Activated T-helper 1 cell treated with anti-CD3 and anti-CD28 coated beads, Interleukin-12 subunit alpha, Interleukin-12 subunit beta, Interleukin-2, Interleukin-4 antibody, amounts not matched to agents 30 ng/mL and 10 ng/mL and 1 ng/mL, durations not matched to agents 14 hours and 24 hours and 36 hours (primary cell): ENCODE measurements at regions of chr15 and their contacts with region 1.

Region 1: GRCh38 chr15:85412956-85413854 is 32.8 kb downstream of the AKAP13 start:
- DNase-seq: peak; percentile 66
- H3K4me3 Mint-ChIP-seq: peak overlapping the region; percentile 64
- H3K27ac Mint-ChIP-seq: peak overlapping the region; percentile 85
- H3K4me1 Mint-ChIP-seq: peaks cover 64% of the 10 kb centered on the region
- H3K27me3 Mint-ChIP-seq: no peaks in the 10 kb centered on the region

Region 2: DNA sequence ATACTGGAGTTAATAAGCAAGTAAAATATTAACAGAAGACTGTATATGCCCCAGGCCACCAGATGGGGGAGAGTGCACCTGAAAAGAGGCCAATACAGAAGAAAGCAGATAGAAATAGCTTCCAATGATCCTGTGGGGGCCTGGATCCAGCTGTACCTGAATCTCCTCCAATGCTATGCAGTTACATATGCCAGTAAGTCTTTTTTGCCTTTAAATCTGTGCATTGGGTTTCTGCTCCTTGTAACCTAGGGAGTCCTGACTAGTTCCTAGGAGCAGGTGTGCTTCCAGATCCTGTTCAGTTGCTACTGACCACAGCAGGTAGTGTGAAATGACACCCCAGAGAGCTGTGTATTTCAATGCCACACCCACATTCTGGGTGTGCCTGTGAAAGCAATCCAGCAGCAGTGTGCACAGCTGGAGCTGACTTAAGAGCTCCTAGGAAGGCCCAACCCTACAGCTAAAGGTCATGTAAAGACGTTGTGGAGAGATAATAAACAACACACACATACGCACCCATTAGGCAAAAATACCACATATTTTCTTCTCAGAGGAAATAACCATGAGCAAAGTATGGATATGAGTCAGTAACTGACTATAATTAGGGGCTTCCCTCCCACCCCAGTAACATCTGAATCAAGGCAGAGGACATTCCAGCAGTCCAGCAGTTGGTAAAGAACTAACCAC is 95.0 kb before region 1 on chr15:
- intact Hi-C with region 1: loop called (anchors 1 kb)
- DNase-seq: peak; percentile 41
- H3K4me3 Mint-ChIP-seq: peak overlapping the region; percentile 38
- H3K27ac Mint-ChIP-seq: peak overlapping the region; percentile 87
- H3K4me1 Mint-ChIP-seq: peaks cover 59% of the 10 kb centered on the region
- H3K27me3 Mint-ChIP-seq: no peaks in the 10 kb centered on the region

Region 3: DNA sequence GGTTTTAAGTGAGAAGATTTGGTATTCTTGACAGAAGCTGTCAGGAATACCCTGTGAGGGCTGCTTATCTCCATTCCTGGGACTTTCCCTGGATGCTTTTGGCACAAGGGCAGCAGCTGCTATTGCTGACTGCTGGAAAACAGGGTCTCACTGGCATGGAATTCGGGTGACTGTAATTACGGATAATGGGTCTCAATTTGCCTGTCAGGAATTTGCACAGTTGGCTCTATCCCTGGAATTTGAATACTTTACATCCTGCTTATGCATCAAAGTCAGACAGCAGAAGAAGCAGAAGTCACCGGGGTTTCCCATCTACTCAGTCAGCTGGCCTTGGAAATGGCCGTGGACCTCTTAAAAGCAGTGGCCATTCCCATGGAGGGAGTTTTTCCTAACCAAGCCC is 58.7 kb before region 1 on chr15:
- intact Hi-C with region 1: loop called (anchors 1 kb)
- DNase-seq: no peak
- H3K4me3 Mint-ChIP-seq: no peak overlapping the region
- H3K27ac Mint-ChIP-seq: no peak overlapping the region
- H3K4me1 Mint-ChIP-seq: peaks cover 9% of the 10 kb centered on the region
- H3K27me3 Mint-ChIP-seq: no peaks in the 10 kb centered on the region

Region 4: DNA sequence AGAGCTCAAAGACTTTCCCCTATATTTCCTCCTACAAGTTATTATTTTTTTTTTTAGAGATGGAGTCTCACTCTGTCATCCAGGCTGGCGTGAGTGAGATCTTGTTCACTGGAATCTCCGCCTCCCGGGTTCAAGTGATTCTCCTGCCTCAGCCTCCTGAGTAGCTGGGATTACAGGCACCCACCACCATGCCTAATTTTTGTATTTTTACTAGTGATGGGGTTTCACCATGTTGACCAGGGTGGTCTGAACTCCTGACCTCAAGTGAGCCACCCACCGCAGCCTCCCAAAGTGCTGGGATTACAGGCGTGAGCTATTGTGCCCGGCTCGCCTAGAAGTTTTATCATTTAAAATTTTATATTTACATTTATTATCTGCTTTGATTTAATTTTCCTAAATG is 26.9 kb before region 1 on chr15:
- intact Hi-C with region 1: no loop called
- DNase-seq: no peak
- H3K4me3 Mint-ChIP-seq: no peak overlapping the region
- H3K27ac Mint-ChIP-seq: no peak overlapping the region
- H3K4me1 Mint-ChIP-seq: peaks cover 39% of the 10 kb centered on the region
- H3K27me3 Mint-ChIP-seq: no peaks in the 10 kb centered on the region

Region 5: GRCh38 chr15:85430406-85431204 is 17.4 kb after region 1 on chr15:
- intact Hi-C with region 1: loop called (anchors 1 kb)
- DNase-seq: no peak
- H3K4me3 Mint-ChIP-seq: no peak overlapping the region
- H3K27ac Mint-ChIP-seq: peak overlapping the region; percentile 34
- H3K4me1 Mint-ChIP-seq: peaks cover 26% of the 10 kb centered on the region
- H3K27me3 Mint-ChIP-seq: no peaks in the 10 kb centered on the region

Region 6: GRCh38 chr15:85543741-85544155 is 130.5 kb after region 1 on chr15:
- intact Hi-C with region 1: loop called (anchors 5 kb)
- DNase-seq: peak; percentile 22
- H3K4me3 Mint-ChIP-seq: peak overlapping the region; percentile 50
- H3K27ac Mint-ChIP-seq: peak overlapping the region; percentile 59
- H3K4me1 Mint-ChIP-seq: peaks cover 83% of the 10 kb centered on the region
- H3K27me3 Mint-ChIP-seq: no peaks in the 10 kb centered on the region

Region 7: DNA sequence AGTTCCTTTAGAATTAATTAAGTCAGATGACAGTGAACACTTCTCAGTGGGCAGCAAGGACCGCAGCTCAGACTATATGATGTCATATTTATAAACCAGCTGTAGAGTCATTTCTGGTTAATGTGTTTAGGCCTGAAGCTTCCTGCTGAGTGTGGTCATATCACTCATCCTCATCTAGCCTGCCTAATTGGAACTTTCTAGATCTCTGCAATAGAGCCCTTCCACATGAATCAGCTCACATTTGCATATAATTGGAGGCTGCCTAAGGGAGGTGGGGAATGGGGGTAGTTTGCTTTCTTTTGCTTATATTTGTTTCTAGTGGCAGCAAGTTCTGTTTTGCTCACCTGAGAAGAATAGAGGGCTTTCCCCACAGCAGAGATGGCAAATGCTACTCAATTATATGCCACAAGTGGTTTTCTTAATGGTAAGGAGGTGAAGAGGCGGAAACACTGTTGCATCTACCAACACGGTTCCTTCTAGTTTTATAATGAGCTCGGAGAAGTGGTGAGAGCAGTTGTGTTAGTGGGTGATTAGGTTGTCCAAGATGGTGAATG is 233.4 kb after region 1 on chr15:
- intact Hi-C with region 1: loop called (anchors 2 kb)
- DNase-seq: peak; percentile 14
- H3K4me3 Mint-ChIP-seq: peak overlapping the region; percentile 30
- H3K27ac Mint-ChIP-seq: peak overlapping the region; percentile 92
- H3K4me1 Mint-ChIP-seq: peaks cover 44% of the 10 kb centered on the region
- H3K27me3 Mint-ChIP-seq: no peaks in the 10 kb centered on the region

Region 8: DNA sequence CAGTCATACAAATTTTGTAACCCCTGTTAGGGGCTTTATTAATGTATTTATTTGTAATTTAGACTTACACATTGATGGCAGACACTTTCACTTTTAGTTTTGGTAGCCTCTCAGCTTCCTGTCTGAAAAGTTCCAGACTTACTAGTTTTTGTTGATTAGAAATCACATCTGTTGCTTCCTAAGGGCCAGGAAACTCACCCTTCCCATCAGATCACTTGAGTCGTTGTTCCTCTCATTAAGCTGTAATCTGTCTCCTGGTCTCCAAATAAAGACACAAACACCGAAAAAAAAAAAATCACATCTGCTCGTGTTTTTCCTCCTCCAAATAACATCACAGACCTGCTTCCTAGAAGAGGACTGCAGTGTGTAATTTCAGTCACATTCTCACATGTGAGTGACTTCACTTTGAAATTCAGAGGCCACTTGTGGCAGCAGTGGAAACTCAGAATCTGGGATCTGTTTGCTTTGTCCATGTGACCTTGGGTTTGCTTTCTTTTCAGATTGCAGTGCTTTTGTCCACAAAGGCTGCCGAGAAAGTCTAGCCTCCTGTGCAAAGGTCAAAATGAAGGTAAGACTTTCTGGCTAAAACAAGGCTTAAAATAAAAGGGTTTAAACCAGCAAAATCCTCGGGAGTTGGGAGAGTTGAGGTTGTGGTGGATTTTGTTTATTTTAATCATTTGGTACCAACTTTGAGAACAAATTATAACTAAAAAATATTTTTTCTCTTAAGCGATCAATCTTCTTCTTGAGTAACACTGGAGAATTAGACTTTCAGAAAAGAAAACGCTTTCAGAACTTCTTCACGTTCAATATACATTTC is 294.5 kb after region 1 on chr15:
- intact Hi-C with region 1: loop called (anchors 5 kb)
- DNase-seq: no peak
- H3K4me3 Mint-ChIP-seq: peak overlapping the region; percentile 83
- H3K27ac Mint-ChIP-seq: peak overlapping the region; percentile 99
- H3K4me1 Mint-ChIP-seq: peaks cover 88% of the 10 kb centered on the region
- H3K27me3 Mint-ChIP-seq: no peaks in the 10 kb centered on the region